ENCODE measurements at regions of chr1 and their contacts with region 1.

Region 1: DNA sequence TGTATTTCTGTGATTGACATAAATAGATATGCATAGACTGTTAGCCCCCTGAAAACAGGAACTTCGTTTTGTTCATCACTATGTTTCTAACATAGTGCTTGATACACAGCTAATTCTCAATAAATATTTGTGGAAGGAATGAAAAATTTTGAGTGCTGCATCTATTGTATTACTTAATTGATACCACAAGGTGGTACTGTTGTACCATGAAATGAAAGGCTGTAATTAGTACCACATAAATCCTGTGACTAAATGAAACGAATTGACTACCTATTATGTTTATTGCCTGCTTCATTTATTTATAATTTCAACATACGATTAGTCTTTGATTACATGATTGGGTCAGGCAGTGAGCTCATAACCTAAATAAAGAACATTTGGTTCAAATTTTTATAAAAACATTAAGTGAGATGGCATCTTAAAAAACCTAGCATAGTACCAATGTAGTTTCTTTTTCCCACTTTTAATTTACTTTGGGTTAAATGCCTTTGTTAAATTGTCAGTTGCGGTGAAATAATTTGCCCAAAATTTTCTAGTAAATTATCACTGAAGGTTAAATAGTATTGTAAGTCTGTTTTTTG is 15.0 kb upstream of the TGFB2 start:
- DNase-seq: peak; percentile 19 to 38 (median 32)
- H3K4me3 ChIP-seq: no peak overlapping the region
- H3K4me3 Mint-ChIP-seq: no peak overlapping the region
- H3K27ac ChIP-seq: no peak overlapping the region
- H3K27ac Mint-ChIP-seq: no peak overlapping the region
- H3K4me1 ChIP-seq: no peaks in the 10 kb centered on the region
- H3K4me1 Mint-ChIP-seq: no peaks in the 10 kb centered on the region
- H3K27me3 ChIP-seq: no peaks in the 10 kb centered on the region
- H3K27me3 Mint-ChIP-seq: no peaks in the 10 kb centered on the region
- CTCF ChIP-seq: peak; percentile 83

Region 2: DNA sequence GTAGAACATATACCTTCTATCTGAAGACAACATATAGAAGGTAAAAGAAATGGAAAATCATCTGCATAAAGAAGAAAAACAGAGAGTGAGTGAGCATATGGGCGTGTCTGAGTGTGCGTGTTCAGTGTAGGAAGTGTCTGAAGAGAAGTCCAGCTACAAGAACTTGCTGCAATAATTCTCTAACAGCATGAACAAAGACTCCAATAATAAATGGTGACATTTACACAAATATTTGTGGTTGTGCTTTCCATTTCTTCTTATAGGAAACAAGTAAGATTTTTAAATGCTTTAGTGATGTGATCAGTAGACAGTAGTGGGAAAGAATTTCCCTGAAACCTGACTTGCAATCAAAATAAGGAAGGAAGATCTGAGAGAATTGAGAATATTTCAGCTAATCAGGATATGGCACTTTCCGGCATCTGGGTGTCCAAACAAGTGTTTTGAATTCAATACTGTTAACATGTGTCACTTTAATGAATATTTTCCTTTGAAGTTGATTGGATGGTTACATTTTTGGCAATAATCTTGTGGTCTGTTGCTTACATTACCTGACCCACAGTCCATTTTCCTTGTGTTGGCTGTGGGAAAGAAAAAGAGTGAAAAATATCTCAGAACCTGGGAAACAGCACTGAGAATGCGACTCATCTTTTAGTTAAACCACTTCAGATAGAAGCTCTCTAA is 169.0 kb after region 1 on chr1:
- intact Hi-C with region 1: no loop called
- DNase-seq: peak; percentile 27 to 39 (median 30)
- H3K4me3 ChIP-seq: peak overlapping the region; percentile 44 to 97 (median 82)
- H3K4me3 Mint-ChIP-seq: peak overlapping the region; percentile 78 to 96
- H3K27ac ChIP-seq: peak overlapping the region in 1 of 2 donors; percentile 85
- H3K27ac Mint-ChIP-seq: peak overlapping the region; percentile 54 to 91 (median 86)
- H3K4me1 ChIP-seq: peaks cover 17 to 18% of the 10 kb centered on the region in 2 donors
- H3K4me1 Mint-ChIP-seq: peaks cover 21% of the 10 kb centered on the region
- H3K27me3 ChIP-seq: no peaks in the 10 kb centered on the region
- H3K27me3 Mint-ChIP-seq: peaks cover 2 to 3% (median 2%) of the 10 kb centered on the region in 3 donors
- CTCF ChIP-seq: no peak

Region 3: GRCh38 chr1:219566951-219567947 is 1237.1 kb after region 1 on chr1:
- intact Hi-C with region 1: loop called in 1 of 2 experiments (anchors 10 kb)
- DNase-seq: peak; percentile 19 to 50 (median 46)
- H3K4me3 ChIP-seq: no peak overlapping the region
- H3K4me3 Mint-ChIP-seq: peak overlapping the region in 1 of 2 donors; percentile 44
- H3K27ac ChIP-seq: no peak overlapping the region
- H3K27ac Mint-ChIP-seq: no peak overlapping the region
- H3K4me1 ChIP-seq: peaks cover 7 to 14% of the 10 kb centered on the region in 2 donors
- H3K4me1 Mint-ChIP-seq: peaks cover 16% of the 10 kb centered on the region
- H3K27me3 ChIP-seq: peaks cover 17 to 21% of the 10 kb centered on the region in 2 donors
- H3K27me3 Mint-ChIP-seq: peaks cover 10 to 28% (median 19%) of the 10 kb centered on the region in 3 donors
- CTCF ChIP-seq: peak; percentile 72

Region 4: DNA sequence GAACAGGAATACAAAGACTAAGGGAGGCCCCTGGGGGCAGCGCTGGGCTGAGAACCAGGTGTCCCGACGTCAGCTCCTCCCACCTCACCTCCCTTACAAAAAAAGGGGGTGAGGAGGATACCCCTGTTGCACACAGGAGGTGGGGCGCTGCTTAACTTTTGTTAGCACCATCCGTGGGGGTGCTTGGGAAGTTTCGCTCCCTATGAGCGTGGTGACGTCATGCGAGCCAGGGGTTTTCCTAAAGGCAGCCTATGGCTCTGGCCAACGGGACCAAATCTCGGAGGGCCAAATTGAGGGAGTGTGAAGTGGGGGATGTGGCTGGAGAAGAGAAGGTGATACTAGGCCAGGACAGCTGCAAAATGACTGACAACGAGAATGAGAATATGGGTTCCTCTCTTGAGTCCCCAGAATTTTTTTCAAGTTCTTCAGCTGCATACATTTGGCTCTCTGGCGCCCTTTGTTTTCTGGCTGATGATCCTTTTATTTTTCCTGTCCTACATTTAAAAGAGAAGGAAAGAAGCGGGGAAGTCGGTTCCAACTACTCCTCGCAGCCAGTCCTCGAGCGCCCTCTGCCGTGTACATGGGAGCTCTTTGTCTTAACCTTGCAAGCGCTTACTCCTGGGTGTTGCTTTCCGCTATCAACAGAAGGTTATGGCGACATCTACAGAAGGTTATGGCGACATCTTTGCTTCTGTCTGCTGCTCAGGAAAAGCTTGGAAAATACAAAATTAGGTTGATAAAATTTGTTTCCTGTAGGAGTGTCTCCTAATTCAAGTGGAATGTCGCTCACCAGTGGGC is 1330.7 kb after region 1 on chr1:
- intact Hi-C with region 1: loop called in 1 of 2 experiments (anchors 5 kb)
- DNase-seq: peak; percentile 62 to 79 (median 75)
- H3K4me3 ChIP-seq: peak overlapping the region; percentile 7 to 77 (median 16)
- H3K4me3 Mint-ChIP-seq: peak overlapping the region; percentile 79 to 95
- H3K27ac ChIP-seq: peak overlapping the region in 1 of 2 donors; percentile 62
- H3K27ac Mint-ChIP-seq: peak overlapping the region in 4 of 7 donors; percentile 69 to 88 (median 77)
- H3K4me1 ChIP-seq: peaks cover 16 to 26% of the 10 kb centered on the region in 2 donors
- H3K4me1 Mint-ChIP-seq: peaks cover 23% of the 10 kb centered on the region
- H3K27me3 ChIP-seq: no peaks in the 10 kb centered on the region
- H3K27me3 Mint-ChIP-seq: peaks cover 3 to 11% (median 4%) of the 10 kb centered on the region in 3 donors
- CTCF ChIP-seq: peak; percentile 82

Measured in CD14-positive monocyte (primary cell).